KBM-7 (cell line): ENCODE measurements at regions of chr9 and their contacts with region 1.

Region 1: GRCh38 chr9:69174616-69175463 is 763 bp downstream of the TJP2 start:
- DNase-seq: peak; percentile 67

Region 2: DNA sequence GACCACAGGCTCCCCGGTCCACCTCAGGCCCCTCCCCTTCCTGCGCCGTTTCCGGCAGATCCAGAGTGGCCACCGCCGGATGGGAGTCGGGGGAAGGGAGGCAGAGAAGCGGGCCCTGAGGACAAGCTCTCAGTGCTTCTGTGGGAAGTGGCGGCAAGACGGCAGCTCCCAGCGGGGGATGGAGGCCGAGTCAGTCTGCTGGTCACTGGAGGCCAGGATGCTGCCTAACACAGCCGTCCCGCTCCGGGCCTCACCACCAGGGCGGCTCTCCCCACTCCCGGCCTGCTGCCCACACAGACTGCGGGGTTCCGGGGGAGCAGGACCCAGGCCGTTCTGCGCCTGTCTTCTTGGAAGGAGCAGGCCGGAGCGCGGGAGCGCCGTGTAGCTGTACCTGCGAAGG is 107.9 kb before region 1 on chr9:
- in situ Hi-C with region 1: loop called (anchors 25 kb)
- DNase-seq: no peak

Region 3: GRCh38 chr9:69081261-69081660 is 93.6 kb before region 1 on chr9:
- in situ Hi-C with region 1: no loop called
- DNase-seq: no peak